HCT116 (cell line): ENCODE measurements at regions of chr11 and their contacts with region 1.

Region 1: DNA sequence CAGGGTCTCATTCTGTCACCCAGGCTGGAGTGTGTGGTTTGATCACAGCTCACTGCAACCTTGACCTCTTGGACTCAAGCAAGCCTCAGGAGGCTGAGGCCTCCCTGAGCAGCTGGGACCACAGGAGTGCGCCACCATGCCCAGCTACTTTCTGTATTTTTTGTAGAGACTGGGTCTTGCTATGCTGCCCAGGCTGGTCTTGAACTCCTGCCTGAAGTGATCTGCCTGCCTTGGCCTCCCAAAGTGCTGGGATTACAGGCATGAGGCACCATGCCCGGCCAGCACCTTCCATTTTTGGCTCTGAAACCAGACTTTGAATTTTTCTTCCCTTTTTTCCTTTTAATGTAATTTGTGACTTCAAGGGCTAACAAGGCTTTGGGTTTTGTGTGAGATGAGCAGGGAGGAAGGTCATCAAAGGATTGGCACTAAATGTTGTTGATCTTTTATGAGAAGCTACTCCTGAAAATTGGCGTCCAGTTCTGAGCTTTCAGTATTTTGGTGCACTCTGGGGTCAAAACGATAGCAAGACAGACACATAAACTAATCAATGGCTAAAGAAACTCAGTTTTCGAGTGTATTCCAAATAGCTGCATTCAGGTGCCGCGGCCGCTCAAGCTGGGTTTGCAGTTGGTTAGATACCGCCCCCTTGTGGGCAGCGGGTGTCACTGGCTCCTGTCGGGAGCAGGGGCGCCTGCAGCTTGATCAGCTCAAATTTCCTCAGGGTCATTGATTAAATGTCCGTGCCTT is 51.9 kb upstream of the CLMP start:
- DNase-seq: peak; percentile 55
- ATAC-seq: peak; percentile 96
- H3K4me3 ChIP-seq: no peak overlapping the region; a peak in 1 of 4 replicates
- H3K27ac ChIP-seq: no peak overlapping the region
- H3K4me1 ChIP-seq: peaks cover 0 to 15% of the 10 kb centered on the region in 2 experiments; a peak in 2 of 4 replicates
- H3K27me3 ChIP-seq: no peaks in the 10 kb centered on the region
- CTCF ChIP-seq: peak; percentile 93 to 98 (median 97)
- POLR2A ChIP-seq: no peak
- RAD21 ChIP-seq: peak; percentile 93

Region 2: GRCh38 chr11:123103326-123103980 is 143.5 kb before region 1 on chr11:
- CTCF ChIA-PET with region 1: interaction called, 78 read pairs
- POLR2A ChIA-PET with region 1: interaction called, 3 read pairs
- RAD21 ChIA-PET with region 1: interaction called, 6 to 9 read pairs
- intact Hi-C with region 1: no loop called
- DNase-seq: peak; percentile 60
- ATAC-seq: peak; percentile 81
- H3K4me3 ChIP-seq: no peak overlapping the region
- H3K27ac ChIP-seq: no peak overlapping the region
- H3K4me1 ChIP-seq: peaks cover 0 to 6% of the 10 kb centered on the region in 2 experiments; a peak in 3 of 4 replicates
- H3K27me3 ChIP-seq: no peaks in the 10 kb centered on the region
- CTCF ChIP-seq: peak; percentile 70 to 76 (median 75)
- POLR2A ChIP-seq: no peak
- RAD21 ChIP-seq: peak; percentile 84

Region 3: GRCh38 chr11:123110356-123110755 is 136.6 kb before region 1 on chr11:
- CTCF ChIA-PET with region 1: interaction called, 78 read pairs
- POLR2A ChIA-PET with region 1: interaction called, 4 read pairs
- RAD21 ChIA-PET with region 1: interaction called, 10 to 15 read pairs
- intact Hi-C with region 1: loop called (anchors 1 kb)
- DNase-seq: no peak
- ATAC-seq: no peak
- H3K4me3 ChIP-seq: no peak overlapping the region
- H3K27ac ChIP-seq: no peak overlapping the region
- H3K4me1 ChIP-seq: peaks cover 0 to 3% of the 10 kb centered on the region in 2 experiments; a peak in 2 of 4 replicates
- H3K27me3 ChIP-seq: no peaks in the 10 kb centered on the region
- CTCF ChIP-seq: no peak
- POLR2A ChIP-seq: no peak
- RAD21 ChIP-seq: no peak

Region 4: DNA sequence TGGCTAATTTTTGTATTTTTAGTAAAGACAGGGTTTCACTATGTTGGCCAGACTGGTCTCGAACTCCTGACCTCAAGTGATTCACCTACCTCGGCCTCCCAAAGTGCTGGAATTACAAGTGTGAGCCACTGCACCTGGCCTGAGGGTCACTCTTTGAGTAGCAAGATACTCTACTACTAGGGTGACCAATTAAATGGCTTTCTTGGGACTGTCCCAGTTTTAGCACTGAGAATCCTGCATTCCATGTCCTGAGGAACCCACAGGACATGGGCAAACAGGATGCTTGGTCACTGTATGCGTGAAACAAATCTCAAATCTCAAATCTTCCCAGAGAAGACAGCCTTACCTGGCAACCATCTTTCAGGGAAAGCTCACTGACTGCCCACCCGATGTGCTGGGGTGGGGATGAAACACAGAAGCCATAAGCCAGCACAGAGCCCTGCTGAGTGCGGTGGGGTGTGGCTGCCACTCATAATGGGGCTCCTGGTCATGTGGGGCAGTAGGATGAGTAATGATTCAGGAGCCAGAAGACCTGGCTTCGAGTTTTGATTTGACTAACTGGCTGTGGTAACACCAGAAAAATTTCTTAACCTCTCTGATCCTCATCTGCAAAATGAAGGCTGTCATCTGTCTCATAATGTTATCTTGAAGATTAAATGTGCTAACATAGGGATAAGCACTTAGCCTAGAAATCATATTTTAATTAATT is 63.4 kb before region 1 on chr11:
- CTCF ChIA-PET with region 1: no interaction called
- POLR2A ChIA-PET with region 1: no interaction called
- RAD21 ChIA-PET with region 1: no interaction called
- intact Hi-C with region 1: no loop called
- DNase-seq: no peak
- ATAC-seq: peak; percentile 62; the same call in 1 of the 2 replicates
- H3K4me3 ChIP-seq: no peak overlapping the region
- H3K27ac ChIP-seq: no peak overlapping the region
- H3K4me1 ChIP-seq: peaks cover 0 to 17% of the 10 kb centered on the region in 2 experiments; a peak in 2 of 4 replicates
- H3K27me3 ChIP-seq: no peaks in the 10 kb centered on the region
- CTCF ChIP-seq: no peak
- POLR2A ChIP-seq: no peak
- RAD21 ChIP-seq: no peak

Region 5: GRCh38 chr11:123235117-123235655 is 11.7 kb before region 1 on chr11:
- CTCF ChIA-PET with region 1: interaction called, 13 read pairs
- POLR2A ChIA-PET with region 1: no interaction called
- RAD21 ChIA-PET with region 1: interaction called in 1 of 2 experiments, 4 read pairs
- intact Hi-C with region 1: no loop called
- DNase-seq: peak; percentile 38
- ATAC-seq: peak; percentile 86
- H3K4me3 ChIP-seq: no peak overlapping the region
- H3K27ac ChIP-seq: no peak overlapping the region
- H3K4me1 ChIP-seq: no peaks in the 10 kb centered on the region
- H3K27me3 ChIP-seq: 0 out of 2 replicates have a peak, but pooled peaks cover 5% of the 10 kb centered on the region
- CTCF ChIP-seq: peak; percentile 34 to 91 (median 84); a peak in 5 of 6 replicates
- POLR2A ChIP-seq: no peak
- RAD21 ChIP-seq: peak; percentile 35

Region 6: DNA sequence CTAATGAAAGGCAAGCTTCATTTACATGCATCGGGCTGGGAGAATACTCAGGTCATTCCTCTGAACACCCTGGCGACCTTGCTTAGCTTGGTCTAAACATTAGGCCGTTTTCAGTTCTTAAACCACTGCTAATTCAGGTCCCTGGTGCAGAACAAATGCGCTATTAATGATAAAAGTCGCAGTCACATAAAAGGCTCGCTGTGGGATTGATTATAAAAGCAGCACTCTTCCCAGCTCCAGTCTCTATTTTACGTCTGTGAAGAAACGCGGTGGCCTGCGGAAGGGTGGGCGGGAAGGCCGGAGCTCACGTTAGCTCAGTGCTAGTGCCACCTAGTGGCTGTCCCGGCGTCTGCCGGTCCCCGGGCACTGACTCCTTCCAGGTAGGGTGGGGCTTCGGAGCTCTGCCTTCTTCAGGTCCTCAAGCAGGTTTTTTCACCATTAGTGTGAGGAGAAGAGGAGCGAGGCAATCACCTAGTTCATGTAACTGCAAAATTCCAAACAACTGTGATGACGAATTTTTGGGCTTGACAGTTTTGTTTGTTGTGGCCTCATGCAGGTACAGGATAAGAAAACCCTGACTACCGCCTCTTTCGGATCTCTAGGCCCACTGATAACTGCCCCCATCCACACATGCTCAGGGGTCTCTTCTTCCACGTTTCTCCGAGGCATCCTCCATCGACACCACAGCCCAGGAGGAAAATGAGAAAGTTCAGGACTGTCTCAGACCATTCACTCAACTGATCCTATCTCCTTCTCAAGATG is 14.6 kb after region 1 on chr11:
- CTCF ChIA-PET with region 1: interaction called, 61 read pairs
- POLR2A ChIA-PET with region 1: interaction called, 4 read pairs
- RAD21 ChIA-PET with region 1: interaction called, 3 read pairs
- intact Hi-C with region 1: no loop called
- DNase-seq: peak; percentile 62
- ATAC-seq: peak; percentile 100
- H3K4me3 ChIP-seq: peak overlapping the region in 1 of 2 experiments; percentile 18; a peak in 1 of 4 replicates
- H3K27ac ChIP-seq: no peak overlapping the region
- H3K4me1 ChIP-seq: peaks cover 0 to 5% of the 10 kb centered on the region in 2 experiments; a peak in 2 of 4 replicates
- H3K27me3 ChIP-seq: peaks cover 10% of the 10 kb centered on the region; the same call in 1 of the 2 replicates
- CTCF ChIP-seq: peak; percentile 85 to 98 (median 96)
- POLR2A ChIP-seq: no peak
- RAD21 ChIP-seq: peak; percentile 77